ENCODE measurements at regions of chr19 and their contacts with region 1.

Region 1: DNA sequence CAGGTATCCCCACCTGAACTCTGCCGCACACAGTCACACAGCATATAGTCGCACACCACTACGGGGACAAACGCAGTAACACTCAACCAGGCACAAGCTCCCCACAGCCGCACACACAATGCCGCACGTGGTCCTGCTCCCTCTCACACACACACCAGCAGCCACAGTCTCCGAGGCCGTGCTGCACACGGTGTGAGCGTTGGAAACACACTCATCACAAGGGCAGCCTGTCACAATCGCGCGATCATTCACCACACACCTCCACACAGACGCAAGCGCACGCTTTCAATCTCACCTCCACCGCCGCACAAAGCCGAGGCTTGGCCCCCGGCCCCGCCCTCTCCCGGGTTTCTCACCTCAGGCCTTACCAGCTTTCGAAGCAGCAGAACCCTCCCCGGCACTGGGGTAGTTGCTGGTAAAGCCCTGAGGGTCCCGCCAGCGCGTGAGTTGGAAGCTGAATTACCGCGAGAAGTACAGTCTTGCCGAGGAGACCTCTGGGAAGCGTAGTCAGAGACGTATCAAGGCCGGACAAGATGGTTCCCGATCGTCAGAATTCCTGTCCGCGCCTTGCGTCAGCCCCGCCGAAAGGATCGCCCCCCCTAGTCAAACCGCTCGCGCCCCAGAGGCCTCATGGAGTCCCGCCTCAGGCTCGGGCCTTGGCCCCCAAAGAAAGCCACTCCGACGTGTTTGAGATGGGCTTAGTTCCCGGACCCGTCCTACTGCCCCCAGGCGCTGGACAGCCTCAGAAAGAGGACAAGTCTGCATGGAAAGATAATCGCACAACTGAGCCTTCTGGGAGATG is at the start of gene ZNF566:
- DNase-seq: peak; percentile 91
- H3K4me3 ChIP-seq: peak within 1 kb of the TSS; percentile 53 to 68
- H3K27ac ChIP-seq: peak within 1 kb of the TSS; percentile 96 to 97
- H3K4me1 ChIP-seq: no peaks in the 10 kb centered on the region
- H3K27me3 ChIP-seq: no peaks in the 10 kb centered on the region
- CTCF ChIP-seq: peak in 1 of 4 experiments; percentile 23
- POLR2A ChIP-seq: peak; percentile 20
- total RNA-seq, gene ZNF566: 9.6 to 20.7 TPM

Region 2: GRCh38 chr19:36198119-36198518 is 291.2 kb before region 1 on chr19:
- intact Hi-C with region 1: loop called (anchors 10 kb)
- DNase-seq: no peak
- H3K4me3 ChIP-seq: no peak overlapping the region
- H3K27ac ChIP-seq: no peak overlapping the region
- H3K4me1 ChIP-seq: no peaks in the 10 kb centered on the region
- H3K27me3 ChIP-seq: no peaks in the 10 kb centered on the region
- CTCF ChIP-seq: no peak
- POLR2A ChIP-seq: no peak

Region 3: DNA sequence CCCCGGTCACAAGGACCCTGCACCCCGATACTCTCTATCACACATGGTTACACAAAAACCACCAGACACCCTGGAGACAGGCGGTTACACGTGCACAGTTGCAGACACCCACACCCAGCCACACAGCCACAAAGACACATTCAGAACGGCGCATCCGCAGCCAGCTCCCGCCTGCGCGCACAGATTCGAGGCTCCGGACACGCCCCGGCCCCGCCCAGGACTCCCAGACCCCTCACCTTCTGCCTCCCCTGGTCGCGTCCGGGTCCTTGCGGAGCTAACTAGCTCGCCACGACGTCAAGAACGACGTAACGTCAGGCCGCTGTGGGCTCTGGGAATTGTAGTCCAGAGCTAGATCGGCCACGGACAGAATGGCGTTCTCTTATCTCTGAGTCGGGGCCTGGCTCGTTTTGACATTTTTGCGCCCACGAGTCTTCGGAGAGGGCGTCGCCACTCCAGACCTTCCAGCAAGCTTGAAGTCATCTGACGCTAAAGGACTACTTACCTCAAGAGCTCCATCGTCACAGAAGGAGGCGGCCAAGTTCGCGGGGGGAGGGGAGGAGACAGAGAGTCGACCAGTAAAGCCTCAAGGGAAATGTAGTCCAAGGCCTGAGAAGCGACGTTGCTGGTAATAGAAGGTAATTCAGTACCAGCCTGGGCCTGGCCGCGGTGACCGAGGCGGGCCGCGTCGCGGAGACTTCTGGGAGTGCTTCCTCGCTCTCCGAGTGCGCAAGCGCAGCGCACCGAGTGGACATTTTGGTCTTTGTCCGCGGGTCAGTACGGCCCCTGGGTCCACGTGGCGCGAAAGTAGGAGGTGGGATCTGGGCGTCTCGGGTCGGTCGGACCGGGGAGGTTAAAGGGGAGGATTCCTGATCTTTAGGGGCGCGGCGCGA is 274.7 kb before region 1 on chr19 and contains the starts of genes ZNF146 and ZNF565:
- intact Hi-C with region 1: no loop called
- DNase-seq: peak; percentile 97
- H3K4me3 ChIP-seq: peak within 1 kb of the TSS; percentile 82 to 84
- H3K27ac ChIP-seq: peak within 1 kb of the TSS; percentile 98
- H3K4me1 ChIP-seq: no peaks in the 10 kb centered on the region
- H3K27me3 ChIP-seq: no peaks in the 10 kb centered on the region
- CTCF ChIP-seq: peak in 2 of 4 experiments; percentile 44 to 51
- POLR2A ChIP-seq: peak; percentile 68
- total RNA-seq, gene ZNF146: 46.9 to 83.6 TPM
- total RNA-seq, gene ZNF565: 3.6 to 6.4 TPM

Region 4: DNA sequence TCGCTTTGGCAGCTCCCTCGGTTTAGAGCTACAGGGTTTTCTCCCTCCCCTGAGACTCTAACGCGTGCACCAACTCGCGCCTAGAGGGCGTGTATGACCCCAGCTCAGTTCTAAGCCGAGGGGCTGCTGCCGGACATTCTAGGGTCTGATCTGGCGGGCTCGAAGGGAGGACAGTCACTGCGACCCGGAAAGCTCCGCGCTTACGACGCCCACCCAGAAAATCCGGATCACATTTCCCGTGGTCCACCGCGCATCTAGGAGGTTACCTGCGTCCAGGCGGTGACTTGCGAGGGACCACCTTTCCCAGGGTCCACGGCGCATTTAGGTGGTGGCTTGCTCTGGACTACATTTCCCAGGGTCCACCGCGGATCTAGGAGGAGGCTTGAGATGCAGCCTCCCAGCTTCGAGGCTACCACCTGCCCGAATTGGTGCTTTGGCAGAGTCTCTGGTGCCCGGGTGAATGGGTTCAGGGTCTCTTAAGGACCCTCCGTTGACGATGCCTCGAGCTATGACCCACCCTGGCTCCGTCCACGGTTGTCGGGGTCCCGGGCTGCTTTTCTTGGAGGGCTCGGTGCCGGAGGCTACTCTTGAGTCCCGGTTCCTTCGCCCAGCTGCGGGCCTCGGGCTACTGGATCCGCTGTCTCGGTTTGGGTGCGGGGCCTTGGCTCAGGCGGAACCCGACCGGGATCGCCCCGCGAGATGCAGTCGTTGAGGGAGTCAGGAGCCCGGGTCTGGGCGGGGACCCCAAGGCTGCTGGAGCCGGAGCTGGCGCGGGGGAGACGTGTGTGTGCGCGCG is 243.9 kb before region 1 on chr19:
- intact Hi-C with region 1: no loop called
- DNase-seq: no peak
- H3K4me3 ChIP-seq: peak overlapping the region; percentile 2 to 19
- H3K27ac ChIP-seq: no peak overlapping the region
- H3K4me1 ChIP-seq: no peaks in the 10 kb centered on the region
- H3K27me3 ChIP-seq: no peaks in the 10 kb centered on the region
- CTCF ChIP-seq: no peak
- POLR2A ChIP-seq: no peak

Region 5: GRCh38 chr19:36257520-36257876 is 231.8 kb before region 1 on chr19:
- intact Hi-C with region 1: no loop called
- DNase-seq: no peak
- H3K4me3 ChIP-seq: peak overlapping the region; percentile 32 to 34
- H3K27ac ChIP-seq: no peak overlapping the region
- H3K4me1 ChIP-seq: no peaks in the 10 kb centered on the region
- H3K27me3 ChIP-seq: no peaks in the 10 kb centered on the region
- CTCF ChIP-seq: no peak
- POLR2A ChIP-seq: no peak

Region 6: GRCh38 chr19:36392916-36393673 is 96.2 kb before region 1 on chr19:
- intact Hi-C with region 1: no loop called
- DNase-seq: no peak
- H3K4me3 ChIP-seq: no peak overlapping the region
- H3K27ac ChIP-seq: no peak overlapping the region
- H3K4me1 ChIP-seq: no peaks in the 10 kb centered on the region
- H3K27me3 ChIP-seq: no peaks in the 10 kb centered on the region
- CTCF ChIP-seq: no peak
- POLR2A ChIP-seq: no peak

Region 7: DNA sequence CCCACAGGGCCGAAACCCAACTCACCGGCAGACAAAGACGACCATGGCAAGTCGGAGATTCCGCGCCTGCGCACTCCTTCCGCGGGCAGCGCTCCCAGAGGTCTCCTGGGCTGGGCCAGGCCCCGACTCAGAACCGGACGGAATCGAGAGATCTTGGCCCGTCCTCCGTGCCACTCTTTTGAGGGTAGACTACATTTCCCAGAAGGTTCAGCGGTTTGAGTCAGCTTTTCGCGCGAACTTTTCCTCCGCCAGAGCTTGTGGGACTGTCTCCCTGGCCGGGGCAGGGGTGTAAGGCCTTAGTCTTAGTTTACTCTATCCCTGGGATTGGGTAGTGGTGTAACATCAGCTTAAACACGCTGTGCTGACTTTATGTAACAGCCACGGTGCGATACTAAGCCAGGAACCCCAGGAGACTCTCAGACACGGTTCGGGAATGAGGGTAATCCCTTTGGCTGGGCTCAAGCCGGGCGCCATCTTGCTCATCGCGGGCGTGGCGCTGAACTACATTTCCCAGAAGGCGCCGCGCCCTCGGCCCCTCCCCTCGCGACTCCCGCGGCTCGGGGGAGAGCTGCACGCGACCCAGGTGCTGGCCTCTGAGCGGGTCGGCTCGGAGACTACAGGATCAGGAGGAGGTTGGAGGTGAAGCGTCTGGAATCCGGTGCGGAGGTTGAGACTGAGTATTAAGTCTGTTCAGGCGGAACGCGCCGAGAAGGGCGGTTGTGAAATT is 39.0 kb after region 1 on chr19 and contains the start of gene ZNF260:
- intact Hi-C with region 1: loop called (anchors 2 kb)
- DNase-seq: peak; percentile 96
- H3K4me3 ChIP-seq: peak within 1 kb of the TSS; percentile 67 to 76
- H3K27ac ChIP-seq: peak within 1 kb of the TSS; percentile 94 to 96
- H3K4me1 ChIP-seq: no peaks in the 10 kb centered on the region
- H3K27me3 ChIP-seq: no peaks in the 10 kb centered on the region
- CTCF ChIP-seq: no peak
- POLR2A ChIP-seq: peak; percentile 26
- total RNA-seq, gene ZNF260: 6.2 to 11.9 TPM